Endothelial cell of umbilical vein (primary cell): ENCODE measurements at regions of chr3 and their contacts with region 1.

Region 1: GRCh38 chr3:195117978-195118581 is 152.9 kb downstream of the XXYLT1 start:
- DNase-seq: peak; percentile 80
- H3K4me3 ChIP-seq: no peak overlapping the region
- H3K27ac ChIP-seq: peak overlapping the region; percentile 87
- H3K4me1 ChIP-seq: peaks cover 49% of the 10 kb centered on the region
- H3K27me3 ChIP-seq: no peaks in the 10 kb centered on the region
- CTCF ChIP-seq: peak; percentile 51 to 58
- POLR2A ChIP-seq: peak; percentile 65

Region 2: GRCh38 chr3:194738254-194739093 is 379.6 kb before region 1 on chr3:
- CTCF ChIA-PET with region 1: no interaction called
- POLR2A ChIA-PET with region 1: no interaction called
- dilution Hi-C with region 1: no loop called
- intact Hi-C with region 1: loop called (anchors 1 kb)
- DNase-seq: peak; percentile 76
- H3K4me3 ChIP-seq: no peak overlapping the region
- H3K27ac ChIP-seq: peak overlapping the region; percentile 76
- H3K4me1 ChIP-seq: peaks cover 44% of the 10 kb centered on the region
- H3K27me3 ChIP-seq: no peaks in the 10 kb centered on the region
- CTCF ChIP-seq: no peak
- POLR2A ChIP-seq: no peak

Region 3: GRCh38 chr3:194900854-194901522 is 217.1 kb before region 1 on chr3:
- CTCF ChIA-PET with region 1: no interaction called
- POLR2A ChIA-PET with region 1: no interaction called
- dilution Hi-C with region 1: no loop called
- intact Hi-C with region 1: no loop called
- DNase-seq: no peak
- H3K4me3 ChIP-seq: no peak overlapping the region
- H3K27ac ChIP-seq: no peak overlapping the region
- H3K4me1 ChIP-seq: peaks cover 5% of the 10 kb centered on the region
- H3K27me3 ChIP-seq: no peaks in the 10 kb centered on the region
- CTCF ChIP-seq: no peak
- POLR2A ChIP-seq: no peak

Region 4: GRCh38 chr3:195030791-195031321 is 87.2 kb before region 1 on chr3:
- CTCF ChIA-PET with region 1: interaction called, 8 read pairs
- POLR2A ChIA-PET with region 1: no interaction called
- dilution Hi-C with region 1: no loop called
- intact Hi-C with region 1: loop called (anchors 1 kb)
- DNase-seq: peak; percentile 95
- H3K4me3 ChIP-seq: no peak overlapping the region
- H3K27ac ChIP-seq: peak overlapping the region; percentile 99
- H3K4me1 ChIP-seq: peaks cover 53% of the 10 kb centered on the region
- H3K27me3 ChIP-seq: no peaks in the 10 kb centered on the region
- CTCF ChIP-seq: no peak
- POLR2A ChIP-seq: peak; percentile 65

Region 5: GRCh38 chr3:195129644-195130492 is 11.8 kb after region 1 on chr3:
- CTCF ChIA-PET with region 1: no interaction called
- POLR2A ChIA-PET with region 1: no interaction called
- dilution Hi-C with region 1: no loop called
- intact Hi-C with region 1: no loop called
- DNase-seq: no peak
- H3K4me3 ChIP-seq: no peak overlapping the region
- H3K27ac ChIP-seq: no peak overlapping the region
- H3K4me1 ChIP-seq: peaks cover 20% of the 10 kb centered on the region
- H3K27me3 ChIP-seq: no peaks in the 10 kb centered on the region
- CTCF ChIP-seq: no peak
- POLR2A ChIP-seq: no peak

Region 6: DNA sequence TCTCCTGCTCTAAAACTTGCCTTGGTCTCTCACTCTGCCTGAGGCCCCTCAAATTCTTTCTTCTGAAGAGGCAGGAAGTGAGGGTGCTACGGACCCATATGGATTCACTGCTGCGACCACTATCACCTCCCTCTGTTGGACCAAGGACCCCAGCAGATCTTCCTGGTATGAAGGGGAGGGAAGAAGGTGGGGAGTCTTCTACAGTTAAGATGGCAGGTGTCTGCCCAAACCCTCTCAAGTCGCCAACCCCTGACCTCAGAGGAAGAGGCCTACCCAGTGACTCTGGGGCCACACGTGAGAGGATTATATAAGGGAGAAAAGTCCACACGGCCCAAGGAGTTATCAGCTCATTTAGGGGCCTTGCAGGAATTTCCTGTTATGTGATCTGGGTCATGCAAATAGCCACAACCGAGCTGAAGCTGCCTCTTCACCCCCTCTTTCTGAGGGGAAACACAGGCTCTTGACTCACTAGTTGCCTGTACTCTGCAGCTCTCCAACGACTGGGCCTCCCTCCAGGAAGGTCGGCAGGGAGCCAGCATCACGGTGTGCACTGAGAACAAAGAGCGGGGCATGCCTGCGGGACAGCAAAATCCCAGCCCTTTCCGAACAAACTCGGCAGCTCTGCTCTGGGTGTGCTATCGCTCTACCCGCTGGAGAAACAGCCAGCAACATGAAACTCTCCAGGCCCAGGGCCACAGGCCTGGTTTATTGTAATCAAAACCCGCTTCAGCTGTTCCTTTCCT is 36.9 kb after region 1 on chr3:
- CTCF ChIA-PET with region 1: interaction called, 16 read pairs
- POLR2A ChIA-PET with region 1: interaction called, 13 read pairs
- dilution Hi-C with region 1: no loop called
- intact Hi-C with region 1: loop called (anchors 1 kb)
- DNase-seq: peak; percentile 100
- H3K4me3 ChIP-seq: no peak overlapping the region
- H3K27ac ChIP-seq: peak overlapping the region; percentile 95
- H3K4me1 ChIP-seq: peaks cover 86% of the 10 kb centered on the region
- H3K27me3 ChIP-seq: no peaks in the 10 kb centered on the region
- CTCF ChIP-seq: no peak
- POLR2A ChIP-seq: peak; percentile 80

Region 7: GRCh38 chr3:195195321-195196209 is 77.5 kb after region 1 on chr3:
- CTCF ChIA-PET with region 1: no interaction called
- POLR2A ChIA-PET with region 1: no interaction called
- dilution Hi-C with region 1: no loop called
- intact Hi-C with region 1: loop called (anchors 2 kb)
- DNase-seq: peak; percentile 57
- H3K4me3 ChIP-seq: no peak overlapping the region
- H3K27ac ChIP-seq: peak overlapping the region; percentile 79
- H3K4me1 ChIP-seq: peaks cover 45% of the 10 kb centered on the region
- H3K27me3 ChIP-seq: no peaks in the 10 kb centered on the region
- CTCF ChIP-seq: peak in 1 of 2 donors; percentile 30
- POLR2A ChIP-seq: no peak

Region 8: GRCh38 chr3:195522254-195523023 is 404.4 kb after region 1 on chr3:
- CTCF ChIA-PET with region 1: no interaction called
- POLR2A ChIA-PET with region 1: no interaction called
- dilution Hi-C with region 1: no loop called
- intact Hi-C with region 1: loop called (anchors 1 kb)
- DNase-seq: peak; percentile 38
- H3K4me3 ChIP-seq: no peak overlapping the region
- H3K27ac ChIP-seq: no peak overlapping the region
- H3K4me1 ChIP-seq: no peaks in the 10 kb centered on the region
- H3K27me3 ChIP-seq: no peaks in the 10 kb centered on the region
- CTCF ChIP-seq: peak; percentile 22 to 34
- POLR2A ChIP-seq: no peak